H1 (cell line): ENCODE measurements at regions of chr2 and their contacts with region 1.

Region 1: DNA sequence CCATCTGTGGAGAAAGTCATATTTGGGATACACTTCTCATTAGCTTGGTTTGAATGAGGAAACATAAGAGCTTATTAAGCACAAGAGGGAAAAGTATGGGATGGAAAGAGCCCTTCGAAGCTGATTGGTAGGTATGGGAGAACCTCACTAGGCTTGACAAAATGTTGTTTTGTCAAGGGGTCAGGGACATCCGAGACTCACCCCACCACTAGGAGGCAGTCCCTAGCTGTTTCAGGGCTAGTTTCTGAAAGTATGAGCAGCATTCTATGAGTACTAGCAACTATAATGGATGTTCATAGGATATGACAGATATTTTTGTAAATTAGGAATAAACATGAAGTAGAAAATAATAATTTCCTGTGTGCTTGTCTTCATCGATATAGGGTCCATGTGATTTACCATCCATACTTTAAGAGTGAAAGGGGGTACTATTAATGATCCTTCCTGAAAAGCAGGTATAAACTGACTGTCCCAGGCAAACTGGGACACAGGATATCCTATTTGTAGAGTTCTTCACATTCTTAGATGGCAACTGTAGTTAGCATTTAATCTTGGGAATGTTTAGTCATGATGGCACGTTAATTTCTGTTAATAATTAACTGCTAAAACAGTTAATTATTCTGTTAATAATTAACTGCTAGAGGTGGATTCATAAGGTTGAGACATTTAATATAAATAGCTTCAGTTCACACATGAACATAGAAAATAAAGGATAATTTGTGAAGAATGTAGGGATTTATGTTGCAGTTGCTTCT is 28.4 kb downstream of the OTX1 start:
- DNase-seq: peak in 1 of 2 experiments; percentile 78
- H3K4me3 ChIP-seq: no peak overlapping the region
- H3K27ac ChIP-seq: no peak overlapping the region
- H3K4me1 ChIP-seq: no peaks in the 10 kb centered on the region
- H3K27me3 ChIP-seq: no peaks in the 10 kb centered on the region
- CTCF ChIP-seq: peak; percentile 77 to 93 (median 79)
- EP300 ChIP-seq: no peak
- POLR2A ChIP-seq: no peak
- RAD21 ChIP-seq: peak; percentile 89 to 92

Region 2: GRCh38 chr2:62895632-62896009 is 183.4 kb before region 1 on chr2:
- CTCF ChIA-PET with region 1: no interaction called
- POLR2A ChIA-PET with region 1: no interaction called
- DNase-seq: no peak
- H3K4me3 ChIP-seq: no peak overlapping the region
- H3K27ac ChIP-seq: no peak overlapping the region
- H3K4me1 ChIP-seq: no peaks in the 10 kb centered on the region
- H3K27me3 ChIP-seq: no peaks in the 10 kb centered on the region
- CTCF ChIP-seq: no peak
- EP300 ChIP-seq: no peak
- POLR2A ChIP-seq: no peak
- RAD21 ChIP-seq: no peak

Region 3: GRCh38 chr2:63189026-63189425 is 110.0 kb after region 1 on chr2:
- CTCF ChIA-PET with region 1: interaction called, 20 read pairs
- POLR2A ChIA-PET with region 1: no interaction called
- DNase-seq: peak; percentile 21 to 73
- H3K4me3 ChIP-seq: no peak overlapping the region
- H3K27ac ChIP-seq: no peak overlapping the region
- H3K4me1 ChIP-seq: no peaks in the 10 kb centered on the region
- H3K27me3 ChIP-seq: no peaks in the 10 kb centered on the region
- CTCF ChIP-seq: peak; percentile 56 to 93 (median 80)
- EP300 ChIP-seq: no peak
- POLR2A ChIP-seq: no peak
- RAD21 ChIP-seq: peak; percentile 86